Posterior cingulate gyrus (tissue), 11 donors: ENCODE measurements at regions of chr2 and their contacts with region 1.

Region 1: DNA sequence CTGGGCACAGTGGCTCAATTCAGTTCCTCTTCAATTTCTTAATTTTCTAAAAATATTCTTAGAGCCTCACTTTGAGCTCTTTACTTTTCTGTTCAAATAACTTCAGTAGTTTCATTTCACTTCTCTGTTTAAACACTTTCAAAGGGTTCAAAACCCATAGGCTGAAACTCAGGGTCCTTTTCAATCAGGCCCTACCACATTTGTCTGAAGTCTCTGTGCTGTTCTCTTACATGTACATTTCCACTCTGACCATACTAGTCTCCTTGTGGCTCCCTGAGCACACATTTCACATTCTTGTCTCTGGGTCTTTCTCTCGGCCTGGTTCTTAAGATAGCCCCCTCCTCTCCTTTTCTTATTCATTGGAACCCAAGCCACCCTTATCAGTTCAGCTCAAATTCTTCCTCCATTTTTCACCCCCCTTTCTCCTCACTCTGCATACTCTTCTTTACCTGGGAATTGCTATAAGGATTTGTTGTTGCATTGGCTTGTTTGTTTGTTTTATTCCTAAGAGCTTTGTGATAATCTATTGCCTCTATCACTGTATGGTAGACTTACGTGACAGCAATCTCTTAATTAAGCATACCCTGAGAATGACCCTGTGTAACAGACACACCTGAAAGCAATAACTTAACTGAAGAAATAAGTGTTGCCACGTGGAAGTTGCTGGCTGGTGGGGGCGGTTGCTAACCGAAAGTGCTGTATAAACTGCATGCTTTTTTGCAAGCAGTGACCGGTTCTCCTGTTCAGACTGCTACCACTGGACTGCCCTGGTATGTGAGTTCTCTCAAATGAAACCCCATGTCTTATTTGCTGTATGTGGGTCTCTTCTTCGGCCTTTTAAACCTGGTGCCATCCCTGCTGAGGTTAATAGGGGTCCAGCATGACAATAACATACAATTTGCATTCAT is 27.7 kb upstream of the ACADL start:
- DNase-seq: no peak

Region 2: DNA sequence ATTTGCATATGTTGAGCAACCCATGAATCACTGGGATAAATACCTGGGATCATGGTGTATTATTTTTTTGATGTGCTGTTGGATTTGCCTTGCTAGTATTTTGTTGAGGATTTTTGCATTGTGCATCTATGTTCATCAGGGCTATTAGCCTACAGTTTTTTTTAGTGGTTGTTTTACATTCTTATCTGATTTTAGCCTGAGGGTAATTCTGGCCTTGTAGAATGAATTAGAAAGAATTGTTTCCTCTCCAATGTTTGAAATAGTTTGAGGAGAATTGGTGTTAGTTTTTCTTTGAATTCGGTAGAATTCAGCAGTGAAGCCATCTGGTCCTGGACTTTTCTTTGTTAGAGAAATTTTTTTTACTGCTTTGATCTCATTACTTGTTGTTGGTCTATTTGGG is 75.7 kb after region 1 on chr2:
- intact Hi-C with region 1: no loop called
- DNase-seq: no peak

Region 3: GRCh38 chr2:210399440-210400041 is 146.6 kb after region 1 on chr2:
- intact Hi-C with region 1: loop called (anchors 2 kb)
- DNase-seq: no peak